Activated CD8-positive, alpha-beta T cell treated with anti-CD3 and anti-CD28 coated beads, Interleukin-2, amount 10 ng/mL, durations not matched to agents 7 days and 5 days (primary cell): ENCODE measurements at regions of chr3 and their contacts with region 1.

Region 1: DNA sequence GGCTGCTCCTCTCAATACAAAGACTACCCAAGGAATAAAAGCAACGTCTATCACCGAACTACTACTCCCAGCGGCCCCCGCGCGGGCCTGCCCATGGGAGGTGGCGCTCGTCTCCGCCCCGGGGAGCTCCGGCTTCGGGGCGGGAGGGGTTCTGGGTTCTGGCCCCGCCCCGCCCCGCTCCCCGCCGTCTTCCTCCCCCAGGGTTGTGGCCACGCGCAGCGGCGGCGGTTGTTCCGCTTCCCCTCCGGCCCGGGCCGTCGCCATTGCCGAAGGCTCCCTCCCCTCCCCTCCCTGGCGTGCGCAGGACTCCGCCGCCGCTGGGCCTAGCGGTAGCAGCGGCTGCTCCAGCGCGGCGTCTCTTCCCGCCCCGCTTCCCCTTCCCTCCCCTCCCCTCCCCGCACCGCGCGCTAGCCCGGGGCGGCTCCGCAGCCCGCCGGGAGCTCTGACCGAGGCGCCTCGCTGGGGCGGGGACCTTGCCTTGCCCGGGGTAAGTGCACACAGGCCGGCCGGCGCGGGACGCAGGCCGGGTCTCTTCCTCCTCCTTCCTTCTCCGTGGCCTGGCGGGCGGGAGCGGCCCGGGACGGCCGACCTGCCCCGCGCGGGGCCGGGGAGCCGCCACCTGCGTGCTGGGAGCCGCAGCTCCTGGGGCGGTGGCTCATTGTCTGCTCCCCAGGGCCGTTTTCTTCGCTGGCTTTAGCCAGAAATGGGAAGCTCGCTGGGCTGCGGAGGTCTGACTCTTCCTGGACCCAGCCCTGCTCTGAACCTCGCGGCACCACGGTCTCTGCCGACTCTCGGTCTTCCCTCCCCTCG is at the start of gene PAK2:
- DNase-seq: peak; percentile 92
- ATAC-seq: peak; percentile 92
- H3K4me3 Mint-ChIP-seq: peak within 1 kb of the TSS; percentile 96
- H3K27ac Mint-ChIP-seq: peak within 1 kb of the TSS; percentile 97
- H3K4me1 Mint-ChIP-seq: peaks cover 22% of the 10 kb centered on the region
- H3K27me3 Mint-ChIP-seq: no peaks in the 10 kb centered on the region
- total RNA-seq, gene PAK2: 84.7 to 104 TPM

Region 2: GRCh38 chr3:196711838-196712513 is 27.9 kb before region 1 on chr3 and contains the starts of genes CEP19 and PIGX:
- CTCF ChIA-PET with region 1: interaction called, 4 read pairs
- POLR2A ChIA-PET with region 1: interaction called, 16 read pairs
- DNase-seq: peak; percentile 91
- ATAC-seq: peak; percentile 87
- H3K4me3 Mint-ChIP-seq: peak within 1 kb of the TSS; percentile 86
- H3K27ac Mint-ChIP-seq: peak within 1 kb of the TSS; percentile 91
- H3K4me1 Mint-ChIP-seq: peaks cover 37% of the 10 kb centered on the region
- H3K27me3 Mint-ChIP-seq: no peaks in the 10 kb centered on the region
- total RNA-seq, gene CEP19: 4.6 to 5.6 TPM
- total RNA-seq, gene PIGX: 41.5 to 42.1 TPM

Region 3: GRCh38 chr3:196726788-196727675 is 12.8 kb before region 1 on chr3:
- CTCF ChIA-PET with region 1: interaction called, 3 read pairs
- POLR2A ChIA-PET with region 1: interaction called, 10 read pairs
- DNase-seq: no peak
- ATAC-seq: peak; percentile 83
- H3K4me3 Mint-ChIP-seq: no peak overlapping the region
- H3K27ac Mint-ChIP-seq: peak overlapping the region; percentile 26
- H3K4me1 Mint-ChIP-seq: peaks cover 26% of the 10 kb centered on the region
- H3K27me3 Mint-ChIP-seq: no peaks in the 10 kb centered on the region